A549 (cell line): ENCODE measurements at regions of chr2 and their contacts with region 1.

Region 1: DNA sequence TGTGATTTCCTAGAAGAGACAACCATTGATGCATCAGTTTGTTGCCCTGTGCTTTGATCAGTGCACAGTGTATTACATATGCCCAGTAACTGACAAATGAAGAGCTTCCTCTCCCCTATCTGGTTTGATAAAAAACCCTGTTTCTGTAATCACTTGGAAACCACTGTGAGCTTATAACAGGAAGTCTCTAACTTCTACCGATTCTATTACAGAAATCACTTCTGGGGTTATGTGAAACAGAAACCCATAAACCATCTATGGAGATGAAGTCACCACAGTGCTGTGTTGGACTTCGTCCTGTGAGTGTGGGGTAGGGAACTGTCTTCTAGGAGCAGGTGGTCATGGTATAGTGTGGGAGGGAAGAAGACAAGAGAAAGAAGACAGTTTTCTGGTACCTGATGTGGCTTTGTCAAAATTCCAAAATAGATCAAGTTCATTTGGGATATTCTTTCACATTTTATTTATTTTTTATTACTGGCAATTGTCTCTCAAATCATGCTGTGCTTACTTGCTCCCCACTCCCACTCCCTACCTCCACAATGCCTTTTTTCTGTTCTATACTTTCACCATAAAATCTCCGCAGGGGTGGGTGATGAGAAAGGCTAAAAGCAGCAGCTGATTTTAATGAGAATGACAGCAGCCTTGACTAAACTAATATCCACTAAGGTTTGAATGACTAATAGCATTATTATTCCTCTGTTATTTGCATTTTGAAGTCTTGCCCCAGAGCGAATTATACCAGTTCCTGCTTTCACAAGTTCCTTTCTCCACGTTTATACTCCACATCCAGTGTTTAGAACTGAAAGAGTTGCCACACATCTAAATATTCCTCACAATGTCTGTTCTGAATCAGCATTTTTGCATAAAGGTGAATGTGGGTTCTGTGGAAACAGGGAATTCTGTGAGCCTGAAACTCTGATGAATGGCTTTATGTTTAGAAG is 41.7 kb upstream of the RND3 start:
- DNase-seq: peak; percentile 56 to 70
- ATAC-seq: peak; percentile 71 to 77
- H3K4me3 ChIP-seq: 0 out of 3 replicates have a peak overlapping the region, but pooled peaks have one; percentile 9
- H3K27ac ChIP-seq: peak overlapping the region; percentile 81 to 85
- H3K4me1 ChIP-seq: peaks cover 63% of the 10 kb centered on the region
- CTCF ChIP-seq: no peak
- EP300 ChIP-seq: peak in 1 of 2 experiments; percentile 70; a peak in 2 of 5 replicates
- POLR2A ChIP-seq: no peak
- RAD21 ChIP-seq: peak in 1 of 2 experiments; percentile 15; a peak in 2 of 5 replicates

Region 2: GRCh38 chr2:150517951-150518680 is 11.0 kb before region 1 on chr2:
- CTCF ChIA-PET with region 1: no interaction called
- POLR2A ChIA-PET with region 1: no interaction called
- DNase-seq: no peak
- ATAC-seq: no peak
- H3K4me3 ChIP-seq: no peak overlapping the region
- H3K27ac ChIP-seq: peak overlapping the region; percentile 13 to 42; a peak in 3 of 6 replicates
- H3K4me1 ChIP-seq: peaks cover 26% of the 10 kb centered on the region; the same call in 2 of the 3 replicates
- CTCF ChIP-seq: no peak
- EP300 ChIP-seq: no peak
- POLR2A ChIP-seq: no peak
- RAD21 ChIP-seq: no peak

Region 3: GRCh38 chr2:150610671-150611279 is 81.6 kb after region 1 on chr2:
- CTCF ChIA-PET with region 1: interaction called, 17 read pairs
- POLR2A ChIA-PET with region 1: interaction called, 3 read pairs
- DNase-seq: peak; percentile 56 to 72
- ATAC-seq: peak; percentile 89 to 94; a peak in 5 of 6 replicates
- H3K4me3 ChIP-seq: no peak overlapping the region
- H3K27ac ChIP-seq: peak overlapping the region; percentile 59 to 65; a peak in 5 of 6 replicates
- H3K4me1 ChIP-seq: peaks cover 28% of the 10 kb centered on the region
- CTCF ChIP-seq: peak; percentile 92
- EP300 ChIP-seq: no peak
- POLR2A ChIP-seq: no peak
- RAD21 ChIP-seq: peak; percentile 96 to 97